T-cell (primary cell): ENCODE measurements at regions of chr10 and their contacts with region 1.

Region 1: GRCh38 chr10:104322416-104322782 is 15.9 kb downstream of the ITPRIP start:
- DNase-seq: peak in 5 of 35 experiments; percentile 20 to 45 (median 27)
- ATAC-seq: peak; percentile 33 to 62 (median 60)
- H3K4me3 ChIP-seq: peak overlapping the region in 1 of 2 donors; percentile 27
- H3K4me3 Mint-ChIP-seq: peak overlapping the region; percentile 62 to 85 (median 65)
- H3K27ac ChIP-seq: peak overlapping the region; percentile 74
- H3K27ac Mint-ChIP-seq: peak overlapping the region; percentile 97 to 98
- H3K4me1 ChIP-seq: peaks cover 84 to 92% of the 10 kb centered on the region in 2 experiments
- H3K4me1 Mint-ChIP-seq: peaks cover 98 to 100% (median 100%) of the 10 kb centered on the region in 3 donors
- H3K27me3 ChIP-seq: no peaks in the 10 kb centered on the region
- H3K27me3 Mint-ChIP-seq: no peaks in the 10 kb centered on the region

Region 2: GRCh38 chr10:104037261-104037951 is 285.0 kb before region 1 on chr10:
- CTCF ChIA-PET with region 1: interaction called in 1 of 2 experiments, 17 read pairs
- POLR2A ChIA-PET with region 1: no interaction called
- DNase-seq: no peak
- ATAC-seq: no peak
- H3K4me3 ChIP-seq: no peak overlapping the region
- H3K4me3 Mint-ChIP-seq: no peak overlapping the region
- H3K27ac ChIP-seq: no peak overlapping the region
- H3K27ac Mint-ChIP-seq: no peak overlapping the region
- H3K4me1 ChIP-seq: no peaks in the 10 kb centered on the region
- H3K4me1 Mint-ChIP-seq: no peaks in the 10 kb centered on the region
- H3K27me3 ChIP-seq: peaks cover 0 to 6% of the 10 kb centered on the region in 2 experiments
- H3K27me3 Mint-ChIP-seq: no peaks in the 10 kb centered on the region

Region 3: GRCh38 chr10:104155591-104155990 is 166.8 kb before region 1 on chr10:
- CTCF ChIA-PET with region 1: no interaction called
- POLR2A ChIA-PET with region 1: no interaction called
- DNase-seq: no peak
- ATAC-seq: no peak
- H3K4me3 ChIP-seq: no peak overlapping the region
- H3K4me3 Mint-ChIP-seq: no peak overlapping the region
- H3K27ac ChIP-seq: no peak overlapping the region
- H3K27ac Mint-ChIP-seq: no peak overlapping the region
- H3K4me1 ChIP-seq: no peaks in the 10 kb centered on the region
- H3K4me1 Mint-ChIP-seq: no peaks in the 10 kb centered on the region
- H3K27me3 ChIP-seq: peaks cover 0 to 9% of the 10 kb centered on the region in 2 experiments
- H3K27me3 Mint-ChIP-seq: peaks cover 28 to 36% of the 10 kb centered on the region in 2 donors

Region 4: DNA sequence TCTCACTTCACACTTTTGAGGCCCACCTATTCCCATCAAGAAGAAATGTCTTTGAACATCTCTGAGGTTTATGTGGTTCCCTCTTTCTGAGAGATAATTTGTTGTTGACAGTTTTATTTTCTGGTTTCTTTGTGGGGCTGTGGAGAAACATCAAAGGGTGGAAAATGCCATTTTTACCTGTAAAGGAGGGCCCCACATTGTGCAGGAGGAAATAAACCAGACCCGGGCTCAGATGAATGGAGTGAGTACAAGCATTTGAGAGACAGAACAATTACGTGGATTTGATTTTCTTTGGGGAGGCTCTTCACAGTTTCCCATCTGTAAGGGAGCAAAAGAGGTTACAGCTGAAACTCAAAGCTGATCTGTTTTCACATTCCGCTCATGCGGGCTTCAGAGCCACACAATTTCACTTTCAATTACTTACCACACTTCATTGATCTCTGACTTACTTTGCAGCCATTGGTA is 13.9 kb before region 1 on chr10:
- CTCF ChIA-PET with region 1: interaction called, 6 to 20 read pairs
- POLR2A ChIA-PET with region 1: interaction called, 5 to 6 read pairs
- DNase-seq: peak in 10 of 35 experiments; percentile 23 to 58 (median 36)
- ATAC-seq: peak; percentile 59 to 72 (median 67)
- H3K4me3 ChIP-seq: no peak overlapping the region
- H3K4me3 Mint-ChIP-seq: peak overlapping the region; percentile 52 to 65 (median 53)
- H3K27ac ChIP-seq: peak overlapping the region; percentile 21
- H3K27ac Mint-ChIP-seq: peak overlapping the region; percentile 75 to 83
- H3K4me1 ChIP-seq: peaks cover 61 to 72% of the 10 kb centered on the region in 2 experiments
- H3K4me1 Mint-ChIP-seq: peaks cover 81 to 84% (median 83%) of the 10 kb centered on the region in 3 donors
- H3K27me3 ChIP-seq: no peaks in the 10 kb centered on the region
- H3K27me3 Mint-ChIP-seq: no peaks in the 10 kb centered on the region

Region 5: DNA sequence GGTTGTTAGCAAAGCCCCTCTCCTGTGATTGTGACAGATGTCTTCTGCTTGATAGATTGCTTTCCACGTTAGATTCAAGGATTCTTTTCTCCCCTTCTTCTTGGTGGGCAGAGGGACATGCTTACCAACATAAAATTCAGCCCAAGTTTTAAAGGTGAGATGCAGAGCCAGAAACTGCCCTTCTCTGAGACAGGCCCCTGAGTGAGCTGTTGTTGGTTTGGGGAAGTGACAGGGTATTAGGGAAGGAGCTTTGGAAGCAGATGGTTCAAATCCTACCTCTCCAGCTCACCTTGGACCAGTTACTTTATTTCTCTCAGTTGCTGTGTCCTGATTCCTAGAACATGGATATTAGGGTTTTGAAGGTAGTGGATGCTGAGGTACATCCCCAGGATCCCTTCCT is 371.7 kb after region 1 on chr10:
- CTCF ChIA-PET with region 1: no interaction called
- POLR2A ChIA-PET with region 1: no interaction called
- DNase-seq: no peak
- ATAC-seq: no peak
- H3K4me3 ChIP-seq: no peak overlapping the region
- H3K4me3 Mint-ChIP-seq: no peak overlapping the region
- H3K27ac ChIP-seq: no peak overlapping the region
- H3K27ac Mint-ChIP-seq: no peak overlapping the region
- H3K4me1 ChIP-seq: no peaks in the 10 kb centered on the region
- H3K4me1 Mint-ChIP-seq: no peaks in the 10 kb centered on the region
- H3K27me3 ChIP-seq: peaks cover 0 to 6% of the 10 kb centered on the region in 2 experiments
- H3K27me3 Mint-ChIP-seq: peaks cover 21 to 23% of the 10 kb centered on the region in 2 donors